CD8-positive, alpha-beta memory T cell (primary cell): ENCODE measurements at regions of chr17 and their contacts with region 1.

Region 1: DNA sequence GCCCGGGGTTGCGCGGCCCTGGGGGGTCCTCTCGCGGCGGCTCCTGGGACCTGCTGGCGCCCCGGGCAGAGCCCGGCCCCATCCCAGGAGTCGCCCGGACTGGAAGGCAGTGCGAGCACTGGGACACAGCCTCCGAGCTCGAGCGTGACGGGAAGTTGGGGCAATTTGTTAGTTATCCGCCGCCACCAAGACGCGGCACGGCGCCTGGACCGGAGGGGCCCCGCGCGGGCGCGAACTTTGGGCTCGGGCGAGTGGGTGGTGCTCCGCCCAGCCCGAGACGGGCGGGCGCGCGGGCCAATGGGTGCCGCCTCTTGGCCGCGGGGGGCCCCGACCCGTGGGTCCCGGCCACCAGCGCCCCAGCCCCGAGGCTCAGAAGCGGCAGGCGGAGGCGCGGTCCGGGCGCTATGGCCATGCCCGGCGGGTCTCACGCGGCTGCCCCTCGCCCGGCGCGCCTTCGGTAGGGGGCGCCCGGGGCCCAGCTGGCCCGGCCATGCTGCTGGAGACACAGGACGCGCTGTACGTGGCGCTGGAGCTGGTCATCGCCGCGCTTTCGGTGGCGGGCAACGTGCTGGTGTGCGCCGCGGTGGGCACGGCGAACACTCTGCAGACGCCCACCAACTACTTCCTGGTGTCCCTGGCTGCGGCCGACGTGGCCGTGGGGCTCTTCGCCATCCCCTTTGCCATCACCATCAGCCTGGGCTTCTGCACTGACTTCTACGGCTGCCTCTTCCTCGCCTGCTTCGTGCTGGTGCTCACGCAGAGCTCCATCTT is at the start of gene ADORA2B:
- DNase-seq: peak in 3 of 5 donors; percentile 17 to 54 (median 20)
- H3K4me3 ChIP-seq: peak within 1 kb of the TSS; percentile 39
- H3K4me3 Mint-ChIP-seq: peak within 1 kb of the TSS; percentile 78 to 92 (median 82)
- H3K27ac ChIP-seq: peak within 1 kb of the TSS; percentile 47
- H3K27ac Mint-ChIP-seq: no peak within 1 kb of the TSS
- H3K4me1 ChIP-seq: no peaks in the 10 kb centered on the region
- H3K4me1 Mint-ChIP-seq: peaks cover 8 to 10% (median 10%) of the 10 kb centered on the region in 3 donors
- H3K27me3 ChIP-seq: no peaks in the 10 kb centered on the region
- H3K27me3 Mint-ChIP-seq: peaks cover 29 to 46% of the 10 kb centered on the region in 2 donors
- total RNA-seq, gene ADORA2B: 0.88 to 0.95 TPM

Region 2: GRCh38 chr17:15928348-15928740 is 16.6 kb before region 1 on chr17:
- CTCF ChIA-PET with region 1: no interaction called
- POLR2A ChIA-PET with region 1: no interaction called
- DNase-seq: no peak
- H3K4me3 ChIP-seq: no peak overlapping the region
- H3K4me3 Mint-ChIP-seq: no peak overlapping the region
- H3K27ac ChIP-seq: no peak overlapping the region
- H3K27ac Mint-ChIP-seq: no peak overlapping the region
- H3K4me1 ChIP-seq: no peaks in the 10 kb centered on the region
- H3K4me1 Mint-ChIP-seq: no peaks in the 10 kb centered on the region
- H3K27me3 ChIP-seq: no peaks in the 10 kb centered on the region
- H3K27me3 Mint-ChIP-seq: peaks cover 23% of the 10 kb centered on the region in 2 donors

Region 3: GRCh38 chr17:15999439-16000350 is 54.8 kb after region 1 on chr17 and contains the starts of genes TTC19 and ZSWIM7:
- CTCF ChIA-PET with region 1: interaction called, 19 read pairs
- POLR2A ChIA-PET with region 1: no interaction called
- DNase-seq: peak; percentile 84 to 93 (median 92)
- H3K4me3 ChIP-seq: peak within 1 kb of the TSS; percentile 87
- H3K4me3 Mint-ChIP-seq: peak within 1 kb of the TSS; percentile 89 to 97 (median 95)
- H3K27ac ChIP-seq: peak within 1 kb of the TSS; percentile 84
- H3K27ac Mint-ChIP-seq: peak within 1 kb of the TSS; percentile 94 to 99 (median 98)
- H3K4me1 ChIP-seq: peaks cover 15% of the 10 kb centered on the region
- H3K4me1 Mint-ChIP-seq: peaks cover 33 to 46% (median 36%) of the 10 kb centered on the region in 3 donors
- H3K27me3 ChIP-seq: no peaks in the 10 kb centered on the region
- H3K27me3 Mint-ChIP-seq: no peaks in the 10 kb centered on the region
- total RNA-seq, gene TTC19: 30.6 to 34.1 TPM
- total RNA-seq, gene ZSWIM7: 11.0 to 12.2 TPM